Mammary epithelial cell (primary cell): ENCODE measurements at regions of chr12 and their contacts with region 1.

Region 1: DNA sequence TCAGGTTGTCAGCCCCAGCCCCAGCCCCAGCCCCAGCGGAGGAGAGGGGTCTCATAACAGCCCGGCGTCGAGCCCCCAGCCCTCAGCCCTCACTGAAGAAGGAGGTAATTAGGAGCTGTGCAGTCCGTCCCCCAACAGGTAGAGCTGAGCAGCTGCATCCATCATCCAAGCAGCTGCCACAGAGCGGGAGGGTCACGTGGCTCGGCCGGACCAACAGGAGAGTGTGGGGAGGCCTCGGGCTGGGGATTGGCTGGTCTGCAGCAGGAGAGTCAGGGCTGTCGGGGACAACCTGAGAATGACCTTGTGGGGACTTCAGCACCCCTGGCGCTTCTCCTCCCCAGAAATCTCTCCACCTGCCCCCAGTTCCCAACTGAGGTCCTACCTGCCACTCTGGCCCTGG is 29.6 kb downstream of the SMUG1 start:
- DNase-seq: peak; percentile 17
- H3K4me3 ChIP-seq: no peak overlapping the region
- H3K27ac ChIP-seq: no peak overlapping the region
- H3K4me1 ChIP-seq: no peaks in the 10 kb centered on the region
- H3K27me3 ChIP-seq: no peaks in the 10 kb centered on the region
- CTCF ChIP-seq: no peak

Region 2: DNA sequence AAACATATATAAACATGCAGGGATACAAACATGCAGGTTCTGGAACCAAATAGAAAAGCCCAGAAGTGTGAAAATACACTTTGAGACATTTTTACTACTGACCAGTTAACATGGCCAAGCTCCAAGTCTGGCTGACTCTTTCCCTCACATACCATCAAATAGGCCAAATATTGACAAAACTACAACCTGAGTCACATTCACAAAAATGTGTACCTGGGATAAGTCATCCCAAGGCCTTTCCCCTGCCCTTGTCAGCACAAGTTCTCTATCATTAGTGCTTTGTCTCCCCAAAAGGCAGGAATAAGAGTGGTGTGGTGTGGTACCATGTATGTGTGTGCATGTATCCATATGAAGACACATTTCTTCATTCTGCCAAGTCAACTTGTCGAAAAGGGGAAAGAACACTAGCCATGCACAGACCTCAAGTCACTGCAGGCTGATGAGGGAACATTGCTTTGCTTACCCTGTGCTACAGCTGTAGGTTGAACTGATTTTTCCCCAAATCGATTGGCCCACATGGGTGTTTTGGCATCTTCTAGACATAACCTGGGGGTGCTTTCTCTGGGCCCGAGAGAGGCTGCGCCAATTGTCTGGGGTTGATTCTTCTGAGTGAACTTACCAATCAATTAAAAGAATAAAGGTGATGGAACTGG is 90.6 kb before region 1 on chr12:
- CTCF ChIA-PET with region 1: no interaction called
- dilution Hi-C with region 1: loop called (anchors 5 kb)
- in situ Hi-C with region 1: no loop called
- intact Hi-C with region 1: no loop called
- DNase-seq: peak; percentile 70
- H3K4me3 ChIP-seq: no peak overlapping the region
- H3K27ac ChIP-seq: no peak overlapping the region
- H3K4me1 ChIP-seq: peaks cover 17% of the 10 kb centered on the region
- H3K27me3 ChIP-seq: no peaks in the 10 kb centered on the region
- CTCF ChIP-seq: no peak

Region 3: DNA sequence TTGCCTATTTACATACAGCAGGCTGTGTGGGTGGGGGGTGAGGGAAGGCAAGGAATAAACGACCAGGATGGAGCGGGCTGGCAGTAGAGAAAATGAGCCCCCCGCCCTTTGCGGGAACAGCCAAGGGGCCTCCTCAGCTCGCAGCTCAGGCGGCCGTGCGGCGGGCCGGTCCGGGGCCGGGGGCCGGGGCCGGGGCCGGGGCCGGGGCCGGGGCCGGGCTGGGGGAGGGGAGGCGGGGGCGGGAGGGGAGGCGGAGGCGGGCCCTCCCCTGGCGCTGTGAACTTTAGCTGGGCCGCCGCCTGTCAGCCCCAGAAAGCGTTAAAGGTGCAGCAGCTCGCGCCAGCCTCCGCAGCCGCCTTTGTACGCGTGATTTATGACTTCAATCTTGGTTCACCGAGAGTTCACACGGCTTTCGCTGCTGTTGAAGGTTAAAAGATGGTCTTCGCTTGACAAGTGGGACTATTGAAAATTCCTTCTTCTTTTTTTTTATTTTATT is 76.7 kb before region 1 on chr12:
- CTCF ChIA-PET with region 1: no interaction called
- dilution Hi-C with region 1: no loop called
- in situ Hi-C with region 1: no loop called
- intact Hi-C with region 1: no loop called
- DNase-seq: no peak
- H3K4me3 ChIP-seq: no peak overlapping the region
- H3K27ac ChIP-seq: no peak overlapping the region
- H3K4me1 ChIP-seq: no peaks in the 10 kb centered on the region
- H3K27me3 ChIP-seq: no peaks in the 10 kb centered on the region
- CTCF ChIP-seq: no peak

Region 4: GRCh38 chr12:54126696-54127537 is 32.2 kb before region 1 on chr12:
- CTCF ChIA-PET with region 1: no interaction called
- dilution Hi-C with region 1: no loop called
- in situ Hi-C with region 1: no loop called
- intact Hi-C with region 1: no loop called
- DNase-seq: peak; percentile 36
- H3K4me3 ChIP-seq: peak overlapping the region; percentile 59 to 73 (median 63)
- H3K27ac ChIP-seq: no peak overlapping the region
- H3K4me1 ChIP-seq: peaks cover 9% of the 10 kb centered on the region
- H3K27me3 ChIP-seq: no peaks in the 10 kb centered on the region
- CTCF ChIP-seq: no peak